BJ (cell line): ENCODE measurements at regions of chr12 and their contacts with region 1.

Region 1: DNA sequence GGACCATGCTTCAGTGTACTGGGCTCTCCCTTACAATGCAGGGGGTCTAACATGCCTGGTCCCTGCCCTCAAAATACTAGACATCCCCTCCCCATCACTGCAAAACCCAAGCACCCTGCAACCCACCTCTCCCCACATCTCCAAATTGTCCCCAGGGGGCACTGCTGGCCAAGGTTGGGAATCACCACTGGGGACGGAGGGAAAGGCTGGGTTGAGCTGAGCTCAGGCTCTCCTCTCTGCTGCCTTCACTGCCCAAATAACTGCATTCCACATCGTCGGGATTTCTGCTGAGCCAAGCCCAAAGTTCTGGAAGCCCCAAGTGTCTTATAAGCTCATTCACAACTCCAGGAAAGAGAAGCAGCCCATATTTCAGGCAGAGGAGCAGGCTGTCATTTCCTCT is 69.6 kb downstream of the NT5DC3 start:
- DNase-seq: no peak
- H3K4me3 ChIP-seq: no peak overlapping the region
- H3K27me3 ChIP-seq: no peaks in the 10 kb centered on the region
- CTCF ChIP-seq: peak; percentile 82

Region 2: GRCh38 chr12:103783744-103784664 is 12.5 kb after region 1 on chr12:
- CTCF ChIA-PET with region 1: interaction called, 13 read pairs
- POLR2A ChIA-PET with region 1: no interaction called
- DNase-seq: no peak
- H3K4me3 ChIP-seq: no peak overlapping the region
- H3K27me3 ChIP-seq: no peaks in the 10 kb centered on the region
- CTCF ChIP-seq: no peak

Region 3: DNA sequence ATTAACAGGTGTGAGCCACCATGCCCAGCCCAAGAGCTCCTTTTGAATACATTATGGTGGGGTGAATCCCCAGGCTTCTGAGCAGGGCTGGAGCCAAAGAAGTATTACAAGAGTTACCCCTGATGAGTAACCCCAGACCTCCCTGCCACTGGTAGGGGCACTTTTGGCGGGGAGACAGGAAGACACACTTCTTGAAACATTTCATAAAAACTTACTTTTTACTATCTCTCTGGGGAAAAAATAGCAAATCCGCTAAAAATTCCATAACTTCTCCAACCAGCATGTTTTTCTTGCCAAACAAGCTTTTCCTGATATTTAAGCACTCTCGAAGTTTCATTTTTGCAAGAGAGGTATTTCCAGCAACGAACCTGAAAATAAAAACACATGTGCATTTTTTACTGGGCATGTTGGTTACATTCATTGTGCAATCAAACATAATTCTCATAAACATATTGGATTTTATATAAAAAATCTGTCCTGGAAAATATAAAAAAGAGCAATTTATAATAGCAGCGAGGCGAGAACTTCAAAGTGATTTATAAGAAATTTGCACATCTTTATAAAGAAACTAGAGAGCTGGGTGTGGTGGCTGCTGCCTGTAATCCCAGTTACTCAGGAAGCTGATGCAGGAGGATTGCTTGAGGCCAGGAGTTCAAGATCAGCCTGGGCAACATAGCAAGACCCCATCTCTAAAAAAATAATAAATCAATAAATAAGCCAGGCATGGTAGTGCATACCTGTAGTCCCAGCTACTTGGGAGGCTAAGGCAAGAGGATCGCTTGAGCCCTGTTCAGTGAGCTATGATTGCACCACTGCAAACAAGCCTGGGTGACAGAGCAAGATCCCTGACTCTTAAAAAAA is 89.7 kb after region 1 on chr12:
- CTCF ChIA-PET with region 1: interaction called, 22 read pairs
- POLR2A ChIA-PET with region 1: no interaction called
- DNase-seq: peak; percentile 53
- H3K4me3 ChIP-seq: no peak overlapping the region
- H3K27me3 ChIP-seq: no peaks in the 10 kb centered on the region
- CTCF ChIP-seq: no peak

Region 4: GRCh38 chr12:103868215-103868614 is 96.7 kb after region 1 on chr12:
- CTCF ChIA-PET with region 1: interaction called, 121 read pairs
- POLR2A ChIA-PET with region 1: interaction called, 16 read pairs
- DNase-seq: no peak
- H3K4me3 ChIP-seq: no peak overlapping the region
- H3K27me3 ChIP-seq: no peaks in the 10 kb centered on the region
- CTCF ChIP-seq: no peak

Region 5: DNA sequence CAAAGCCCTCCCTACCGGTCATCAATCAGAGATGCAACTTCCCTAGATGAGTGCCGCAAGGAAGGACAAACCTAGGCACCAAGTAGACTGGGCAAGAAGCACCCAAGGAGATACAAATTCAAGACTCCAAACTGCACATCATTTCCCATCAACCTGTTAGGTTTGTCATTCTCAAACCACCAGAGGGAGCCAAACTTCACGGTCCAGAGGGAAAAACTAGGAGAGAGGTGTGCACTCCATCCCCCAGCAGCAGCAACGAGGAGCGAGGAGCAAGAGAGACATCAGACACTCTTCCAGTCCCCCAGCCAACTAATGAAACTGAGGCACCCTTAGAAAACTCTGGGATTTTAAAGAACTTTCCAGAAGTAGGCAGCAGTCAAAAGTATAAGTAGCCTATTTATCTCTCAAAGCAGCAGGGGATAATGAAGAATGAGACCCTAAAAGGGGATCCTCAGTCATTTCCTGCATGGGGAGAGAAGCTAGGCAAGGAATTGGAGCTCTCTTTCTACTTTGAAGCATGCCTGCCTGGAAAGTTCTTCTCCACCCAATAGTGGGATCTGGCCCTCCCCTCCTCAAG is 106.6 kb after region 1 on chr12:
- CTCF ChIA-PET with region 1: interaction called, 12 read pairs
- POLR2A ChIA-PET with region 1: no interaction called
- DNase-seq: no peak
- H3K4me3 ChIP-seq: no peak overlapping the region
- H3K27me3 ChIP-seq: no peaks in the 10 kb centered on the region
- CTCF ChIP-seq: peak; percentile 77